Activated T-helper 2 cell treated with anti-CD3 and anti-CD28 coated beads, Interferon-gamma antibody, Interleukin-2, Interleukin-4, amounts not matched to agents 10 μg/mL and 5 μg/mL and 100 μg/mL, durations not matched to agents 14 hours and 24 hours and 36 hours (primary cell): ENCODE measurements at regions of chr2 and their contacts with region 1.

Region 1: GRCh38 chr2:98835831-98836385 is 100.1 kb downstream of the CRACDL start:
- DNase-seq: peak; percentile 33
- H3K4me3 Mint-ChIP-seq: peak overlapping the region; percentile 24
- H3K27ac Mint-ChIP-seq: peak overlapping the region; percentile 79
- H3K4me1 Mint-ChIP-seq: peaks cover 40% of the 10 kb centered on the region
- H3K27me3 Mint-ChIP-seq: peaks cover 11% of the 10 kb centered on the region

Region 2: DNA sequence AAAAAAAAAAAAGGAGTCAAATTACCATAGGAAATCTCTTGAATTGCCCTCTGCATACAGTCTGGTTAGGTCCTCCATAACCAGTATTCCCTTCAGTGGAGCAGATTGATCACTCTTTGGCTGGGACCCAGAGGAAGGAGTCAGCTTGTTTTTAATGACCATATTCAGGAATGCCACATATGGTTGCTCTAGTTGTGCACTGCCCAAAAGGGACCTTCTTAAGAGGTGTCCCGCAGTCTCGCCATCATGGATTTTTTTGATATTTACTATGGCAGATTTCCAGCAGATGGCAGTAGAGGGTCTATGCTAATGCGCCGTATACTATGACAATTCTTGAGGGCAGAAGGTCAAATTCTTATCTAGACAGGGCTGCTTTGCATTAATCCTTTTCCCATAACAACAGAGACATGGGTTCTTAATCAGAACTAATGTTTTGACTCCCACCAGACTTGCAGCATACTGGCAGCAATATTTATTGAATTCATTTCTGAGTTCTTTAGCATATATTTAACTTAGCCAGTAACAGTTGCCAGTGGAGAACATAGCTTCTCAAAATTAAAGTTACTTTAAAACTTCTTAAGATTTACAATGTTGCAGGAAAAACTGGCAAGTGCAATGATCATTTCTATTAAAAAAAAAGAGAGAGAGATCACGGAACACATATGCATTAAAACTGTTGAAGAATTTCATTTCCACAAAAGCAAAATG is 423.0 kb before region 1 on chr2:
- intact Hi-C with region 1: loop called (anchors 2 kb)
- DNase-seq: peak; percentile 43
- H3K4me3 Mint-ChIP-seq: no peak overlapping the region
- H3K27ac Mint-ChIP-seq: no peak overlapping the region
- H3K4me1 Mint-ChIP-seq: peaks cover 8% of the 10 kb centered on the region
- H3K27me3 Mint-ChIP-seq: peaks cover 9% of the 10 kb centered on the region

Region 3: GRCh38 chr2:98568881-98569793 is 266.8 kb before region 1 on chr2:
- intact Hi-C with region 1: loop called (anchors 1 kb)
- DNase-seq: peak; percentile 40
- H3K4me3 Mint-ChIP-seq: no peak overlapping the region
- H3K27ac Mint-ChIP-seq: no peak overlapping the region
- H3K4me1 Mint-ChIP-seq: no peaks in the 10 kb centered on the region
- H3K27me3 Mint-ChIP-seq: no peaks in the 10 kb centered on the region

Region 4: DNA sequence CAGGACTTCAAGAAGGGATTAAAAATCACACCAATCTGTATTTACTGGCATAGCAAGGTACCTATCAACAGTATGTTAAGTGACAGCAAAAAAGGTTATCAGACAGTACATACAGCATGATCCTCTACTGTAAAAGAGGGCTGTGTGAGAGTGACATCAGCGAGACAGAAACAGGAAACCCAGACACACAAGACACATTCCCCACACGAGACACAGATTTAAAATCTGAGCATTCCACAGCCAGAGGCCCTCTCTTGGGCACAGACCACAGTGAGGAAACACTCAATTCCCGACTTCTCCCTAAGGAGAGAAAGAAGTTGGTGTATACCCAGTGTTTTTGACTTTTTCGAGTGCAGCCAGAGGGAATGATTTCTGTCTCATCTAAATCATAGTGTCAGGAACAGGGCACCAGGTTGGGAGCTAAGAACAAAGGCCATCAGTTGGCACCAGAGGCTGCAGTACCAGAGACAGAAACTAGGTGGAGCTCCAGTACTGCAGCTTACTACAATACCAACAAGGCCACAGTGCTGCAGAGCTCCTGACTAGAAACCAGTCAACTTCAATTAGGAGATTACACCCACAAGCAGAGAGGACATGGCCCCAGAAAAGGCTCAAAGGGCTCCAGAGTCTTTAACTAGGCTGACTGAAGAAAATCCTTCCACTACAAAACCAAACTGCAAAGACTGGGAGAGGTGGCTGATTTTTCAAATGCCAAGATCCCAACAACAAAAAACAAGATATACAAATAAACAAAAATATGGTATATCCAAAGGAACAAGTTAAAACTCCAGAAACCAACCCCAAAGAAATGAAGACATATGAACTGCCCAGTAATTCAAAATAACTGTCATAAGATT is 186.5 kb before region 1 on chr2:
- intact Hi-C with region 1: loop called (anchors 1 kb)
- DNase-seq: peak; percentile 68
- H3K4me3 Mint-ChIP-seq: no peak overlapping the region
- H3K27ac Mint-ChIP-seq: peak overlapping the region; percentile 48
- H3K4me1 Mint-ChIP-seq: peaks cover 49% of the 10 kb centered on the region
- H3K27me3 Mint-ChIP-seq: no peaks in the 10 kb centered on the region

Region 5: GRCh38 chr2:99066075-99066958 is 230.4 kb after region 1 on chr2:
- intact Hi-C with region 1: loop called (anchors 2 kb)
- DNase-seq: peak; percentile 17
- H3K4me3 Mint-ChIP-seq: no peak overlapping the region
- H3K27ac Mint-ChIP-seq: no peak overlapping the region
- H3K4me1 Mint-ChIP-seq: no peaks in the 10 kb centered on the region
- H3K27me3 Mint-ChIP-seq: peaks cover 3% of the 10 kb centered on the region